ENCODE measurements at regions of chr1 and their contacts with region 1.

Region 1: GRCh38 chr1:222455188-222455879 is 92.6 kb downstream of the HHIPL2 start:
- DNase-seq: peak; percentile 97
- H3K4me3 Mint-ChIP-seq: peak overlapping the region; percentile 37
- H3K27ac Mint-ChIP-seq: peak overlapping the region; percentile 54
- H3K4me1 Mint-ChIP-seq: peaks cover 16% of the 10 kb centered on the region
- H3K27me3 Mint-ChIP-seq: no peaks in the 10 kb centered on the region
- CTCF ChIP-seq: peak; percentile 100

Region 2: GRCh38 chr1:220810179-220810653 is 1645.1 kb before region 1 on chr1:
- CTCF ChIA-PET with region 1: interaction called, 12 read pairs
- POLR2A ChIA-PET with region 1: no interaction called
- intact Hi-C with region 1: loop called (anchors 1 kb)
- DNase-seq: peak; percentile 91
- H3K4me3 Mint-ChIP-seq: no peak overlapping the region
- H3K27ac Mint-ChIP-seq: no peak overlapping the region
- H3K4me1 Mint-ChIP-seq: no peaks in the 10 kb centered on the region
- H3K27me3 Mint-ChIP-seq: no peaks in the 10 kb centered on the region
- CTCF ChIP-seq: peak; percentile 99

Region 3: GRCh38 chr1:221494670-221495069 is 960.7 kb before region 1 on chr1:
- CTCF ChIA-PET with region 1: interaction called, 15 read pairs
- POLR2A ChIA-PET with region 1: interaction called, 3 read pairs
- intact Hi-C with region 1: no loop called
- DNase-seq: peak; percentile 71
- H3K4me3 Mint-ChIP-seq: no peak overlapping the region
- H3K27ac Mint-ChIP-seq: no peak overlapping the region
- H3K4me1 Mint-ChIP-seq: peaks cover 13% of the 10 kb centered on the region
- H3K27me3 Mint-ChIP-seq: no peaks in the 10 kb centered on the region
- CTCF ChIP-seq: no peak

Region 4: DNA sequence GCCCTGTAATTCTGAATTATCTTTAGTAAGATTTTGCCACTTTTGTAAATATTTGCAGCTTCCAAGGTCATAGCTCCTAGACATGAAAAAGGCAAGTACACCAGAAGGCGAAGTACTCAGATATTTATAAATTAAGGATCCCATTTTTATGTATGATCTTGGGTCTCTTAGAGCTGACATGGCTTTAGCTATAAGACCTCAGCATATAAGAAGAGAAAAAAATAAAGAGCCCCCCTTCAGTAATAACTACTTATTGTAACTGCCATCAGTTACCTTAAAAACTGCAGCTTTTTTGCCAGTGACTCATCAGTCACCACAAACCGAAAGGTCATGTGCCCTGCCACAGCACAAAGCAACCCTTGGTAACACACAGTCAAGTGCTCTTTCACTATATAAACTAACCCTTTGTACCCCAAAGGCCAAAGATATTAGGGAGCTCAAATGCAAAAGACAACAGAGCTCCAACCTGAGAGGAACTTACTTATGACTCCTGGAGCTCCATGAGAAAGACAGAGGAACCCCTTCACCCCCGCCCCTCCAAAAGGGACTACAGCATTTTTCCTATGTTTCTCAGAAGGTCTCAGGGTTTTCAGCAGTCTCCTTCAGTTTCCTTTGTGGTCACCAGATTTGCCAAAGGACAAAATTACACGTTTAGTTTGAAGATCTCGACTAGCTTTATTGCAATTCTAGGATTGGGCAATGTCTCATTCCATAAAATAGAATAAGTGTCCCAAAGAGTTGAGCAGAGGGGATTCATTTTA is 493.6 kb before region 1 on chr1:
- CTCF ChIA-PET with region 1: interaction called, 13 read pairs
- POLR2A ChIA-PET with region 1: no interaction called
- intact Hi-C with region 1: no loop called
- DNase-seq: peak; percentile 76
- H3K4me3 Mint-ChIP-seq: peak overlapping the region; percentile 0
- H3K27ac Mint-ChIP-seq: peak overlapping the region; percentile 52
- H3K4me1 Mint-ChIP-seq: peaks cover 23% of the 10 kb centered on the region
- H3K27me3 Mint-ChIP-seq: no peaks in the 10 kb centered on the region
- CTCF ChIP-seq: no peak

Region 5: DNA sequence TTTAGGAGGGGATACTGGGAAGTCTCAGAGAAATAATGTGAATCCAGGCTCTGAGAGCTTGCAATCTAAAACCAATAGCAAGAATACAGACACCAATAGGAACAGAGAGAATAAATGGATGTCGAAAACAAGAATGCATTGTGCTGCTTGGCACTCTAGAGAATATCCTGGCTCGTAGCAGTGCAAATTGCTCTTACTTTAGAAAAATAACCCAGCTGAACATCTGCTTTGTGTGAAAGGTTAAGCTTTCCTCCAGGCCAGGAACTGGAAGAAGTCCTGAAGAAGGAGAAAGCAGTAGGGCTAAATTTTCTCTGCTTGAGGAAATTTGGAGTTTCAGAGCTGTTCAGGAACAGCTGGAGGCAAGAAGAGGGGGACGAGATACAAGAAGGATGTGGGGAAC is 289.7 kb before region 1 on chr1:
- CTCF ChIA-PET with region 1: interaction called, 43 read pairs
- POLR2A ChIA-PET with region 1: interaction called, 4 read pairs
- intact Hi-C with region 1: loop called (anchors 1 kb)
- DNase-seq: no peak
- H3K4me3 Mint-ChIP-seq: no peak overlapping the region
- H3K27ac Mint-ChIP-seq: no peak overlapping the region
- H3K4me1 Mint-ChIP-seq: peaks cover 16% of the 10 kb centered on the region
- H3K27me3 Mint-ChIP-seq: no peaks in the 10 kb centered on the region
- CTCF ChIP-seq: no peak

Region 6: GRCh38 chr1:222240536-222241181 is 214.7 kb before region 1 on chr1:
- CTCF ChIA-PET with region 1: interaction called, 36 read pairs
- POLR2A ChIA-PET with region 1: interaction called, 3 read pairs
- intact Hi-C with region 1: no loop called
- DNase-seq: peak; percentile 64
- H3K4me3 Mint-ChIP-seq: no peak overlapping the region
- H3K27ac Mint-ChIP-seq: peak overlapping the region; percentile 57
- H3K4me1 Mint-ChIP-seq: peaks cover 24% of the 10 kb centered on the region
- H3K27me3 Mint-ChIP-seq: no peaks in the 10 kb centered on the region
- CTCF ChIP-seq: no peak

Region 7: GRCh38 chr1:222441066-222441465 is 14.3 kb before region 1 on chr1:
- CTCF ChIA-PET with region 1: interaction called, 92 read pairs
- POLR2A ChIA-PET with region 1: interaction called, 3 read pairs
- intact Hi-C with region 1: no loop called
- DNase-seq: no peak
- H3K4me3 Mint-ChIP-seq: no peak overlapping the region
- H3K27ac Mint-ChIP-seq: no peak overlapping the region
- H3K4me1 Mint-ChIP-seq: no peaks in the 10 kb centered on the region
- H3K27me3 Mint-ChIP-seq: no peaks in the 10 kb centered on the region
- CTCF ChIP-seq: no peak